Transverse colon (tissue), 4 donors: ENCODE measurements at regions of chr7 and their contacts with region 1.

Region 1: DNA sequence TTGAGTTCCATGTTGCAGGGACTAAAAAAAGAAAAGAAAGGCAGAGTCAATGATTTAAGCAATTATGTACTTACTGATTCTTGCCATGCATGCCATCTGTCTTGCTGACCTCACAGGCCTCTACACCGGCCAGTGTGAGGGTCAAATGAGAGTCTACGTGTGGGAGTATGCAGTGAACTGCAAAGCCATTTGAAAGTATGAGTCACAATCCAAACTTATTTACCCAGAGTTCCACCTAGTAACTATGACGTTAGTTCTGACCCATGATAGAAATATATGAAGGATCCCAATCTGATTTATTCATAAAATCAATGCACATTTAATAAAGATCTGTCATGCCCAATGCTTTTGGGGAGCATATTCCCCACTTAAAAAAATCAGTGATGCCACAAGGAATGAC is 26.5 kb downstream of the PDE1C start:
- DNase-seq: no peak
- H3K4me3 ChIP-seq: no peak overlapping the region
- H3K27ac ChIP-seq: no peak overlapping the region
- H3K4me1 ChIP-seq: no peaks in the 10 kb centered on the region
- H3K27me3 ChIP-seq: no peaks in the 10 kb centered on the region
- CTCF ChIP-seq: no peak
- EP300 ChIP-seq: no peak
- POLR2A ChIP-seq: no peak

Region 2: GRCh38 chr7:32062150-32062549 is 18.4 kb after region 1 on chr7:
- in situ Hi-C with region 1: no loop called
- intact Hi-C with region 1: loop called (anchors 2 kb)
- DNase-seq: peak; percentile 51
- H3K4me3 ChIP-seq: no peak overlapping the region
- H3K27ac ChIP-seq: no peak overlapping the region
- H3K4me1 ChIP-seq: peaks cover 0 to 15% (median 3%) of the 10 kb centered on the region in 4 donors
- H3K27me3 ChIP-seq: no peaks in the 10 kb centered on the region
- CTCF ChIP-seq: peak; percentile 27 to 49 (median 48)
- EP300 ChIP-seq: no peak
- POLR2A ChIP-seq: no peak